ENCODE measurements at regions of chr7 and their contacts with region 1.

Region 1: DNA sequence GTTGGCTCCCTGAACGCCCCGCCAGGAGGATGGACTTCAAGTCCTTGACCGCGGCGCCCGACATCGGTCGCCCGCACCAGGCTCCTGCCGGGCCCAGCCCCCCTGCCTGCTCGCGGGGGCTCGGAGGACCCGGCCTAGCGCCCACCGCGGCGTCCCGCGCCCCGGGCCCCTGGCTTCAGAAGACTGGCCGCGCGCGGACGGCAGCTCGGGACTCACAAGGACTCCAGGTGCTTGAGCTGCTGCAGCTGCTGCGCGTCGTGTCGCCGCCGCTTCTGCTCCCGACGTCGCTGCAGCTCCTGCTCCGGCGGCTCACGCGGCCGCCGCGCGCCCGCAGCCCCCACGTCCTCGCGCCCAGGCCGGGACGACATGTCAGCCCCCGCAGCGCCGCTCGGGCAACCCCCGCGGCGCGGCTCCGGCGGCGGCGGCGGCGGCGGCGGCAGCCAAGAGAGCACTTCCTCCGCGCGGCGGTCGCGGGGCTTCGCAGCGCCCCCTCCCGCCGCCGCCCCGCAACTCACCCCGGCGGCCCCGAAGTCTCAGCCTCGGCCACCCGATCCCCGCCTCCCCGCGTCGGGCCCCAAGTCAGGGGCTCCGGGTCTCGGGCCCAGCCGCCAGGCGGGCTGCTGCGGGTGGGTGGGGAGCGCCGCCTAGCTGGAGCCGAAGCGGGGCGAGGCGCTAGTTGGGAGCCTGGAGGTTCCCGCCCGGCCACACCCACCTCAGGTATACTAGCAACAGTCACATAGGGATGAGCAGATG is at the start of gene RP9:
- DNase-seq: peak; percentile 72
- H3K4me3 Mint-ChIP-seq: peak within 1 kb of the TSS; percentile 91
- H3K27ac Mint-ChIP-seq: peak within 1 kb of the TSS; percentile 42
- H3K4me1 Mint-ChIP-seq: peaks cover 34% of the 10 kb centered on the region
- H3K27me3 Mint-ChIP-seq: peaks cover 21% of the 10 kb centered on the region
- total RNA-seq, gene RP9: 22.6 and 23.6 TPM in 2 replicates

Region 2: DNA sequence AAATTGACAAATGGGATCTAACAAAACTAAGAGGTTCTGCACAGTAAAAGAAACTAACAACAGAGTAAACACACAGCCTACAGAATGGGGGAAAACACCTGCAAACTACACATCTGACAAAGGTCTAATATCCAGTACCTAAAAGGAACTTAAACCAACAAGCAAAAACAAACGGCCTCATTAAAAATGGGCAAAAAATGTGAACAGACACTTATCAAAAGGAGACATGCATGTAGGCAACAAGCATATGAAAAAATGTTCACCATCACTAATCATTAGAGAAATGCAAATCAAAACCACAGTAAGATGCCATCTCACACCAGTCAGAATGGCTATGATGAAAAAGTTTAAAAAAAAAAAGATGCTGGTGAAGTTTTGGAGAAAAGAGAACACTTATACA is 415.0 kb before region 1 on chr7:
- intact Hi-C with region 1: loop called (anchors 2 kb)
- DNase-seq: no peak
- H3K4me3 Mint-ChIP-seq: no peak overlapping the region
- H3K27ac Mint-ChIP-seq: no peak overlapping the region
- H3K4me1 Mint-ChIP-seq: peaks cover 7% of the 10 kb centered on the region
- H3K27me3 Mint-ChIP-seq: peaks cover 4% of the 10 kb centered on the region

Region 3: GRCh38 chr7:32803406-32804141 is 305.6 kb before region 1 on chr7:
- intact Hi-C with region 1: loop called (anchors 1 kb)
- DNase-seq: no peak
- H3K4me3 Mint-ChIP-seq: no peak overlapping the region
- H3K27ac Mint-ChIP-seq: no peak overlapping the region
- H3K4me1 Mint-ChIP-seq: no peaks in the 10 kb centered on the region
- H3K27me3 Mint-ChIP-seq: peaks cover 3% of the 10 kb centered on the region

Region 4: GRCh38 chr7:32942786-32943653 is 166.2 kb before region 1 on chr7:
- intact Hi-C with region 1: loop called (anchors 1 kb)
- DNase-seq: peak; percentile 65
- H3K4me3 Mint-ChIP-seq: peak overlapping the region; percentile 91
- H3K27ac Mint-ChIP-seq: peak overlapping the region; percentile 76
- H3K4me1 Mint-ChIP-seq: peaks cover 29% of the 10 kb centered on the region
- H3K27me3 Mint-ChIP-seq: peaks cover 10% of the 10 kb centered on the region

Region 5: GRCh38 chr7:33062782-33063443 is 46.3 kb before region 1 on chr7:
- intact Hi-C with region 1: loop called (anchors 1 kb)
- DNase-seq: peak; percentile 88
- H3K4me3 Mint-ChIP-seq: peak overlapping the region; percentile 97
- H3K27ac Mint-ChIP-seq: peak overlapping the region; percentile 96
- H3K4me1 Mint-ChIP-seq: peaks cover 38% of the 10 kb centered on the region
- H3K27me3 Mint-ChIP-seq: peaks cover 9% of the 10 kb centered on the region

Region 6: GRCh38 chr7:33155811-33156210 is 46.6 kb after region 1 on chr7:
- intact Hi-C with region 1: no loop called
- DNase-seq: no peak
- H3K4me3 Mint-ChIP-seq: no peak overlapping the region
- H3K27ac Mint-ChIP-seq: no peak overlapping the region
- H3K4me1 Mint-ChIP-seq: no peaks in the 10 kb centered on the region
- H3K27me3 Mint-ChIP-seq: no peaks in the 10 kb centered on the region

Measured in activated T-helper 1 cell treated with anti-CD3 and anti-CD28 coated beads, Interleukin-12 subunit alpha, Interleukin-12 subunit beta, Interleukin-2, Interleukin-4 antibody, amounts not matched to agents 30 ng/mL and 10 ng/mL and 1 ng/mL, durations not matched to agents 14 hours and 24 hours and 36 hours (primary cell).